ENCODE measurements at regions of chrX and their contacts with region 1.

Region 1: DNA sequence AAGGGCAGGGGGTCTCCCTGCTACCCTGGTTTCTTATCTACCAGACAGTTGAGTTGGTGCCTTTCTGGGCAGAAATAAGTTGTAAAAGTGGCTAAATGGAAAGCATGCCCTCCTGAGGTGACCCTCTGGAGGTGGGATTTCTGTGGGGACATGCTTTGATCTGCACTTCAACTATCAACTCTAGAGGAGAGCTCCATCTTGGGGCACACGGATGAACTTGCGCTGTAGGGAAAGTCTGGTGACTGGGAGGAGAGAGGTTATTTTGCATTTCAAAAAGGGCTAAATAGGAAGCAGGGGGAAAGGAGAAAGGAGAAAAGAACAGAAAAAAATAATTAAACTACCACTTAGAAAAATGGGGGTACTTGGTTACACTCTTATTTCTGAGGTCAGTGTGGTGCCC is 12.7 kb upstream of the RHOXF2B start:
- DNase-seq: no peak
- ATAC-seq: no peak
- H3K4me3 ChIP-seq: no peak overlapping the region
- H3K4me3 Mint-ChIP-seq: no peak overlapping the region
- H3K27ac ChIP-seq: no peak overlapping the region
- H3K27ac Mint-ChIP-seq: no peak overlapping the region
- H3K4me1 ChIP-seq: no peaks in the 10 kb centered on the region
- H3K4me1 Mint-ChIP-seq: no peaks in the 10 kb centered on the region
- H3K27me3 ChIP-seq: no peaks in the 10 kb centered on the region
- H3K27me3 Mint-ChIP-seq: no peaks in the 10 kb centered on the region
- CTCF ChIP-seq: no peak

Region 2: GRCh38 chrX:119685225-119686066 is 404.8 kb before region 1 on chrX:
- CTCF ChIA-PET with region 1: no interaction called
- POLR2A ChIA-PET with region 1: no interaction called
- intact Hi-C with region 1: no loop called
- DNase-seq: peak in 4 of 9 experiments; percentile 51 to 80 (median 54)
- ATAC-seq: peak; percentile 35
- H3K4me3 ChIP-seq: peak overlapping the region; percentile 31 to 53
- H3K4me3 Mint-ChIP-seq: peak overlapping the region; percentile 81
- H3K27ac ChIP-seq: peak overlapping the region; percentile 79 to 99
- H3K27ac Mint-ChIP-seq: peak overlapping the region; percentile 99
- H3K4me1 ChIP-seq: peaks cover 74% of the 10 kb centered on the region
- H3K4me1 Mint-ChIP-seq: peaks cover 68% of the 10 kb centered on the region
- H3K27me3 ChIP-seq: no peaks in the 10 kb centered on the region
- H3K27me3 Mint-ChIP-seq: no peaks in the 10 kb centered on the region
- CTCF ChIP-seq: no peak

Region 3: GRCh38 chrX:120144178-120144844 is 54.1 kb after region 1 on chrX:
- CTCF ChIA-PET with region 1: no interaction called
- POLR2A ChIA-PET with region 1: no interaction called
- intact Hi-C with region 1: loop called in 1 of 2 experiments (anchors 10 kb)
- DNase-seq: no peak
- ATAC-seq: no peak
- H3K4me3 ChIP-seq: no peak overlapping the region
- H3K4me3 Mint-ChIP-seq: no peak overlapping the region
- H3K27ac ChIP-seq: no peak overlapping the region
- H3K27ac Mint-ChIP-seq: no peak overlapping the region
- H3K4me1 ChIP-seq: no peaks in the 10 kb centered on the region
- H3K4me1 Mint-ChIP-seq: peaks cover 15% of the 10 kb centered on the region
- H3K27me3 ChIP-seq: no peaks in the 10 kb centered on the region
- H3K27me3 Mint-ChIP-seq: no peaks in the 10 kb centered on the region
- CTCF ChIP-seq: no peak

Region 4: GRCh38 chrX:120207009-120207615 is 116.9 kb after region 1 on chrX:
- CTCF ChIA-PET with region 1: no interaction called
- POLR2A ChIA-PET with region 1: no interaction called
- intact Hi-C with region 1: loop called in 1 of 2 experiments (anchors 10 kb)
- DNase-seq: no peak
- ATAC-seq: no peak
- H3K4me3 ChIP-seq: no peak overlapping the region
- H3K4me3 Mint-ChIP-seq: no peak overlapping the region
- H3K27ac ChIP-seq: no peak overlapping the region
- H3K27ac Mint-ChIP-seq: no peak overlapping the region
- H3K4me1 ChIP-seq: no peaks in the 10 kb centered on the region
- H3K4me1 Mint-ChIP-seq: no peaks in the 10 kb centered on the region
- H3K27me3 ChIP-seq: no peaks in the 10 kb centered on the region
- H3K27me3 Mint-ChIP-seq: no peaks in the 10 kb centered on the region
- CTCF ChIP-seq: no peak

Region 5: GRCh38 chrX:120250522-120251271 is 160.5 kb after region 1 on chrX and contains the start of gene ZBTB33:
- CTCF ChIA-PET with region 1: no interaction called
- POLR2A ChIA-PET with region 1: no interaction called
- intact Hi-C with region 1: no loop called
- DNase-seq: peak; percentile 68 to 94 (median 79)
- ATAC-seq: peak; percentile 99
- H3K4me3 ChIP-seq: peak within 1 kb of the TSS; percentile 58 to 68
- H3K4me3 Mint-ChIP-seq: peak within 1 kb of the TSS; percentile 92
- H3K27ac ChIP-seq: peak within 1 kb of the TSS; percentile 82 to 91
- H3K27ac Mint-ChIP-seq: peak within 1 kb of the TSS; percentile 98
- H3K4me1 ChIP-seq: no peaks in the 10 kb centered on the region
- H3K4me1 Mint-ChIP-seq: peaks cover 37% of the 10 kb centered on the region
- H3K27me3 ChIP-seq: no peaks in the 10 kb centered on the region
- H3K27me3 Mint-ChIP-seq: peaks cover 2% of the 10 kb centered on the region
- CTCF ChIP-seq: peak; percentile 52
- total RNA-seq, gene ZBTB33: 26.4 to 30.7 TPM

Region 6: GRCh38 chrX:120271218-120271617 is 181.0 kb after region 1 on chrX:
- CTCF ChIA-PET with region 1: no interaction called
- POLR2A ChIA-PET with region 1: no interaction called
- intact Hi-C with region 1: no loop called
- DNase-seq: no peak
- ATAC-seq: no peak
- H3K4me3 ChIP-seq: no peak overlapping the region
- H3K4me3 Mint-ChIP-seq: no peak overlapping the region
- H3K27ac ChIP-seq: no peak overlapping the region
- H3K27ac Mint-ChIP-seq: no peak overlapping the region
- H3K4me1 ChIP-seq: peaks cover 12% of the 10 kb centered on the region
- H3K4me1 Mint-ChIP-seq: peaks cover 7% of the 10 kb centered on the region
- H3K27me3 ChIP-seq: no peaks in the 10 kb centered on the region
- H3K27me3 Mint-ChIP-seq: no peaks in the 10 kb centered on the region
- CTCF ChIP-seq: no peak